Calu3 (cell line): ENCODE measurements at regions of chr17 and their contacts with region 1.

Region 1: DNA sequence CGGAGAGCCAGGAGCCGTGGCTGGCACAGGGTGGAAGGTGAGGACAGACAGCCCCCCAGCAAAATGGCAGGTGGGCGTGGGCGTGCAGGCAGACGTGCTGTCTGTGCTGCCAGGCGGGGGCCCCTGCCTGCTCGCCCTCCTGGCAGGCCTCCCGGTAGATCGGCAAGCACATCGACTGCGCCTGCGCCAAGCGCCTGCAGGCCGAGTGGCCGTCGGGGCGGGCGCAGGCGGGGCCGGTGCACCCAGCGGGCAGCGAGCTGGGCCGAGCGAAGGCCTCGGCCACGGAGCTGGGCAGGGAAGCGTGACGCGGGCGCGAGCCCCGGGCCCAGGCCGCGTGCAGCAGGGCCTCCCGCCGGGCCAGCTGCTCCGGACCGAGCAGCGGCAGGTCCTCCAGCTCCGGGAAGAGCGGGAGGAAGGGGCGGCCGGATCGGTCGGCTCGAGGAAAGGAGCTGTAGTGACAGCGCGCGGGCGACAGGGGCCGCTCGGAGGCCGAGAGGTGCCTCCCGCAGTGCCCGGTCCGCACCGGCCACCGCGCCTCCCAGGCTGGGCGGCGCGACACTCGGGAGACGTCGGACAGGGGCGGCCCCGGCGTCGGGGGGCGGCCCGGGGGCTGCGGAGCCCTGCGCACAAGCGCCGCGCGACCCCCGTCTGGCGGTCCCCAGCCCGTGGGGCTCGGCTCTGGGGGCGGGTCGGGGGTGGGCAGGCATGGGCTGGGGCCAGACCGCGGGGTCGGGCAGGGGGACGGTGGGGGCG is 16.9 kb downstream of the GRIN2C start:
- DNase-seq: peak; percentile 77
- H3K4me3 Mint-ChIP-seq: peak overlapping the region; percentile 49
- H3K27ac Mint-ChIP-seq: no peak overlapping the region
- H3K4me1 Mint-ChIP-seq: no peaks in the 10 kb centered on the region
- H3K27me3 Mint-ChIP-seq: peaks cover 16% of the 10 kb centered on the region
- CTCF ChIP-seq: peak; percentile 66

Region 2: GRCh38 chr17:75313941-75314551 is 471.3 kb after region 1 on chr17:
- CTCF ChIA-PET with region 1: interaction called, 11 read pairs
- intact Hi-C with region 1: no loop called
- DNase-seq: no peak
- H3K4me3 Mint-ChIP-seq: no peak overlapping the region
- H3K27ac Mint-ChIP-seq: no peak overlapping the region
- H3K4me1 Mint-ChIP-seq: peaks cover 10% of the 10 kb centered on the region
- H3K27me3 Mint-ChIP-seq: no peaks in the 10 kb centered on the region
- CTCF ChIP-seq: no peak